HepG2 (cell line): ENCODE measurements at regions of chr19 and their contacts with region 1.

Region 1: GRCh38 chr19:39532233-39533002 is at the start of gene EID2B:
- DNase-seq: peak; percentile 91
- ATAC-seq: peak; percentile 96
- H3K4me3 ChIP-seq: peak within 1 kb of the TSS; percentile 81 to 93 (median 89)
- H3K27ac ChIP-seq: peak within 1 kb of the TSS; percentile 45
- H3K4me1 ChIP-seq: peaks cover 15% of the 10 kb centered on the region
- H3K27me3 ChIP-seq: no peaks in the 10 kb centered on the region; a peak in 2 of 5 replicates
- CTCF ChIP-seq: peak; percentile 99
- EP300 ChIP-seq: no peak
- POLR2A ChIP-seq: peak; percentile 47 to 85; a peak in 3 of 4 replicates
- RAD21 ChIP-seq: peak; percentile 96
- total RNA-seq, gene EID2B: 3.6 and 3.7 TPM in 2 replicates

Region 2: DNA sequence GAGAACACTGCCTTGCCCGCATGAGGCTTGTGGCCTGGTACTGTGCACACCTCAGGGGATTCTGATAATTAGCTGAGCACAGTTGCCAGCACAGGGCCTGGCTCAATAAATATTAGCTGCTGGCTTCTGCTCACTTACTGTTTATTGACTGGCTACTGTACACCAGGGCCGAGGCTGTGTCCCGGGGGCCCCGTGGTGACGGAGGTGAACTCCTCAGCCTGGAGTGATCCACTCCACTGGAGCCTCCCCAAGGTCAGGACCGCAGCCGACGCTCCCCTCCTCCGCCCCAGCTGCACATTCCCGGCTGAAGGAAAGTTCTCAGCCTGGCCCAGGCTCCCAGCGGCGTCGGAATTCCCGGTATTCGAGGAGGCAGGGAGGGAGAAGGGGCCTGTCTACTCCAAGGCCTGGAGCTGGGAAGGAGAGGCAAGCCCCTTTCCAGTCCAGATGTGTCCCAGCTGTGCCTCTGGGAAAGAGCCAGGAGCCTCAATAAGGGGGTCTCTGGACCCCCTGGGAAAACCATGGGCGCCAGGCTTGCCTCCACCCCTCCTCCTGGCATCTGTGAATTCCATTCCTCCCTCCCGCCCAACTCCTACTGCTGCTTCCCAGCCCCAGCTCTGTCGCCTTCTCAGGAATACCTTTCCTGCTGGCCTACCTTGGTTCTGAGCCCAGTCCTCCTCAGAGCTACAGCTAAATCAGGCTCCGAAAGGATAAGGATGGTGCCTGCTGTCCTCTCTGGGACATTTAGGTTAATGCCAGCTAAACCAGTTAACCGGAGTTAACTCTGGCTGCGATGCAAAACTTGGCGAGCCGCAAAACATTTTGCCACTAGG is 103.9 kb before region 1 on chr19:
- CTCF ChIA-PET with region 1: no interaction called
- POLR2A ChIA-PET with region 1: no interaction called
- in situ Hi-C with region 1: no loop called
- intact Hi-C with region 1: no loop called
- DNase-seq: peak; percentile 66
- ATAC-seq: peak; percentile 80
- H3K4me3 ChIP-seq: peak overlapping the region; percentile 33 to 72 (median 52)
- H3K27ac ChIP-seq: peak overlapping the region; percentile 62
- H3K4me1 ChIP-seq: peaks cover 52% of the 10 kb centered on the region
- H3K27me3 ChIP-seq: no peaks in the 10 kb centered on the region
- CTCF ChIP-seq: no peak
- EP300 ChIP-seq: no peak
- POLR2A ChIP-seq: no peak
- RAD21 ChIP-seq: no peak

Region 3: GRCh38 chr19:39474139-39474622 is 58.2 kb before region 1 on chr19:
- CTCF ChIA-PET with region 1: interaction called, 20 read pairs
- POLR2A ChIA-PET with region 1: no interaction called
- in situ Hi-C with region 1: no loop called
- intact Hi-C with region 1: loop called (anchors 1 kb)
- DNase-seq: peak; percentile 30
- ATAC-seq: peak; percentile 87
- H3K4me3 ChIP-seq: no peak overlapping the region
- H3K27ac ChIP-seq: no peak overlapping the region
- H3K4me1 ChIP-seq: no peaks in the 10 kb centered on the region
- H3K27me3 ChIP-seq: no peaks in the 10 kb centered on the region; a peak in 1 of 5 replicates
- CTCF ChIP-seq: peak; percentile 90
- EP300 ChIP-seq: no peak
- POLR2A ChIP-seq: no peak
- RAD21 ChIP-seq: peak; percentile 70

Region 4: DNA sequence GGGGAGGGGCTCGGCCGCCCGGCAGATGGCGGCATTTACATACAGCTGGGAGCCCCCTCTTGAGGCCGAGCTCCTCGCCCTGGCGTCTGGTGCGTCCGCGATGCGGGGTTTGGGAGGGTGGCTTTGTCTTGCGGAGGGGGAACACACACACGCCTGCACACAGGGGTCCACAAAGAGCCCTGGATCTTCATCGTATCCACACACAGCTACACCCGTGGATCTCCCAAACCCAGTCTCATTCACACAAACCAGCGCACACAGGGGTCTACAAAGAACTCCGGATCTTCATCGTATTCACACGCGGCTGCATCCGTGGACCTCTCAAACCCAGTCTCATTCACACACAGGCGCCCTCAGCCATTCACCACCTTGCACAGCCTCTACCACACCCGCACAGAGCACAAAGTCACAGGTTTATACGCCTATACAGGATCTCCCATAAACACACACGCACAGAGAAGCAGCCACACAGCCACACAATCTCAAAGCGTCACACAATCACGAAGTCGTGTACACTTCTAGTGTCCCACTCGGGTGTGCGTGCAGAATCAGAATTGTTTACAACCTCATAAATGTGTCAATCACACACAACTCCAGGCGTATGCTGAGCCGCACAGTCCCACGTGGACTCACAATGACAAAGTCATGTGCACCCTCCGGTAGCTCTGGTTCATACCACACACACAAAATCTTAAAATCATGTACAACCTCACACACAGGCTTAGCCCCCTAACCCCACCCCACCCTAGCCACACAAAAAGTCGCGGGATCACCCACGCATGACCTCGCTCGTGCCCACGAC is 34.2 kb before region 1 on chr19:
- CTCF ChIA-PET with region 1: interaction called, 3 read pairs
- POLR2A ChIA-PET with region 1: interaction called, 3 read pairs
- in situ Hi-C with region 1: loop called (anchors 5 kb)
- intact Hi-C with region 1: no loop called
- DNase-seq: peak; percentile 36
- ATAC-seq: peak; percentile 79
- H3K4me3 ChIP-seq: peak overlapping the region; percentile 24 to 64 (median 41); a peak in 5 of 6 replicates
- H3K27ac ChIP-seq: no peak overlapping the region
- H3K4me1 ChIP-seq: peaks cover 28% of the 10 kb centered on the region
- H3K27me3 ChIP-seq: peaks cover 5 to 38% of the 10 kb centered on the region in 2 experiments; a peak in 4 of 5 replicates
- CTCF ChIP-seq: peak; percentile 88
- EP300 ChIP-seq: no peak
- POLR2A ChIP-seq: no peak
- RAD21 ChIP-seq: peak; percentile 65

Region 5: GRCh38 chr19:39520191-39520471 is 12.3 kb before region 1 on chr19:
- CTCF ChIA-PET with region 1: no interaction called
- POLR2A ChIA-PET with region 1: no interaction called
- in situ Hi-C with region 1: no loop called
- intact Hi-C with region 1: no loop called
- DNase-seq: no peak
- ATAC-seq: no peak
- H3K4me3 ChIP-seq: no peak overlapping the region
- H3K27ac ChIP-seq: no peak overlapping the region
- H3K4me1 ChIP-seq: peaks cover 32% of the 10 kb centered on the region
- H3K27me3 ChIP-seq: peaks cover 0 to 16% of the 10 kb centered on the region in 2 experiments; a peak in 3 of 5 replicates
- CTCF ChIP-seq: no peak
- EP300 ChIP-seq: no peak
- POLR2A ChIP-seq: no peak
- RAD21 ChIP-seq: no peak

Region 6: GRCh38 chr19:39544226-39544903 is 11.9 kb after region 1 on chr19:
- CTCF ChIA-PET with region 1: no interaction called
- POLR2A ChIA-PET with region 1: no interaction called
- in situ Hi-C with region 1: no loop called
- intact Hi-C with region 1: no loop called
- DNase-seq: no peak
- ATAC-seq: no peak
- H3K4me3 ChIP-seq: no peak overlapping the region
- H3K27ac ChIP-seq: no peak overlapping the region
- H3K4me1 ChIP-seq: peaks cover 20% of the 10 kb centered on the region
- H3K27me3 ChIP-seq: peaks cover 1 to 14% of the 10 kb centered on the region in 2 experiments; a peak in 3 of 5 replicates
- CTCF ChIP-seq: no peak
- EP300 ChIP-seq: no peak
- POLR2A ChIP-seq: no peak
- RAD21 ChIP-seq: no peak

Region 7: DNA sequence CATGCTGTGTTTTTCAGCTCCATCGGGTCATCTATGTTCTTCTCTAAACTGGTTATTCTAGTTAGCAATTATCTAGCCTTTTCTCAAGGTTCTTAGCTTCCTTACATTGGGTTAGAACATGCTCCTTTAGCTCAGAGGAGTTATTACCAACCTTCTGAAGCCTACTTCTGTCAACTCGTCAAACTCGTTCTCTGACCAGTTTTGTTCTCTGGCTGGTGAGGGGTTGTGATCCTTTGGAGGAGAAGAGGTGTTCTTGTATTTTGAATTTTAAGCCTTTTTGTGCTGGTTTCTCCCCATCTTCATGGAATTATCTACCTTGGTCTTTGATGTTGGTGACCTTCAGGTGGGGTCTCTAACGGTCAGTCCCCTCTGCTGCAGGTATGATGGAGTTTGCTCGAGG is 90.8 kb after region 1 on chr19:
- CTCF ChIA-PET with region 1: no interaction called
- POLR2A ChIA-PET with region 1: no interaction called
- in situ Hi-C with region 1: no loop called
- intact Hi-C with region 1: no loop called
- DNase-seq: no peak
- ATAC-seq: no peak
- H3K4me3 ChIP-seq: no peak overlapping the region
- H3K27ac ChIP-seq: no peak overlapping the region
- H3K4me1 ChIP-seq: no peaks in the 10 kb centered on the region; the same call in 1 of the 2 replicates
- H3K27me3 ChIP-seq: no peaks in the 10 kb centered on the region
- CTCF ChIP-seq: no peak
- EP300 ChIP-seq: no peak
- POLR2A ChIP-seq: no peak
- RAD21 ChIP-seq: no peak